Calu3 (cell line): ENCODE measurements at regions of chr4 and their contacts with region 1.

Region 1: GRCh38 chr4:168585168-168586091 is 88.6 kb downstream of the PALLD start:
- DNase-seq: peak; percentile 64
- H3K4me3 Mint-ChIP-seq: no peak overlapping the region
- H3K27ac Mint-ChIP-seq: no peak overlapping the region
- H3K4me1 Mint-ChIP-seq: peaks cover 17% of the 10 kb centered on the region
- H3K27me3 Mint-ChIP-seq: no peaks in the 10 kb centered on the region
- CTCF ChIP-seq: peak; percentile 62

Region 2: DNA sequence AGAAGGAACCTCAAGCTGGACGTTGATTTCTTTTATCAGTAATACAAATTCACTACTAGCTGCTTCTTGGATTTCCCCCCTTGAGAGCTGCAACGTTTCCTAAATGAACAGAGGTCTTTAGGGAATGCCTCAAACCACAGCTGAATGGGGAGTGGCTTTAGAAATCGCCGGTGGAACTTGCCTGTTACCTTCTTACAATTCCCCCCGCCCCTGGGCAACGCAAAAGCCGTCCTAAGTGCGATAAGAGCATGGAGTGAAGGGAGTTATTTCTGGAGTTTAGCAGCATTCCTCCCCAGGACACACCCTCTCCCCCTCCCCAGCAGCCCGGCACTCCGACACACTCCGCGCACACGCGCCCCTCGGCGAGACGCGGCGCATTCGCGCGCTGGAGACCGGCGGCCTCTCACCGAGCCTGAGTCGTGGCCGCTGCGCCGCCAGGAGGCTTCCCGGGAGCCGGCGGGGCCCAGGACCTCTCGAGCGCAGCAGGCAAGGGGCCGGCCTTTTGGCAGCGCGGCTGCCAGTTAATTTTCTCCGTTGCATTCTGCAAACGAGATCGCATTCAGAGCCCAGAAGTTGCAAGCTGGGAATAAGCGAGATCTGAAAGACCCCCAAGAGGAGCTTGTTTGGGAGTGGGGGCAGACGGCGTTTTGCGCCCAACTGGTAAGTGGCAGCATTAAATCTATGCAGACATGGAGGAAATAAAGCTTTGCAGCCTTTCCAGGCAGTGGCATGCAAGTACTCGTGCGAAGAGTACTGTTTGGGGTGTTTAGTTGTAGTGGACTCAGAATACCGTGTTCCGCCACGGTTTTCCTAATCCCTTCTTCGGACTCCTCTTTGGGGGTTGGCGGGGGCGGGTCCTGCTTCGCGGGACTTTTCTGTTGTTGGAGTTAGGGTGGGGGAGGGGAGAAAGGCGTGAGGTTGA is 46.1 kb after region 1 on chr4:
- CTCF ChIA-PET with region 1: no interaction called
- intact Hi-C with region 1: loop called (anchors 5 kb)
- DNase-seq: peak; percentile 64
- H3K4me3 Mint-ChIP-seq: peak overlapping the region; percentile 83
- H3K27ac Mint-ChIP-seq: no peak overlapping the region
- H3K4me1 Mint-ChIP-seq: peaks cover 13% of the 10 kb centered on the region
- H3K27me3 Mint-ChIP-seq: no peaks in the 10 kb centered on the region
- CTCF ChIP-seq: no peak

Region 3: DNA sequence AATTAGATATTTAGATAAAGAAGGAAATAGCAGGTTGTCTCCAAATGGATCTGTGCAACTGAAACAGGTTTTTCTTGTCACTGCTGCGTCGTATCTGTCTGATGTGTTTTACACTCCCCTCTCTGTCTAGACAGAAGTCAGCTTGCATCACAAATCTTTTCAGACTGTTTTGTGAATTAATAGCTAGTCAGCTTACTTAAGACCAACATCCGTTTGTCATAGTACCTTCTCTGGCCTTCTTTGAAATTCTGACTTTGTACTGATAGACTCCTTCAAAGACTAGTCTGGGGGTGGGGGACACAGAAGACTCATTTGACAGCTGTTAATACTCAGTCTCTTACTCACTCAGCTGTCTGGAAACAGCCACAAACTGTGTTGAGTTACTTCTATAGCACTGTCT is 109.2 kb after region 1 on chr4:
- CTCF ChIA-PET with region 1: no interaction called
- intact Hi-C with region 1: loop called (anchors 5 kb)
- DNase-seq: no peak
- H3K4me3 Mint-ChIP-seq: no peak overlapping the region
- H3K27ac Mint-ChIP-seq: no peak overlapping the region
- H3K4me1 Mint-ChIP-seq: peaks cover 11% of the 10 kb centered on the region
- H3K27me3 Mint-ChIP-seq: no peaks in the 10 kb centered on the region
- CTCF ChIP-seq: no peak

Region 4: GRCh38 chr4:168710353-168710946 is 125.0 kb after region 1 on chr4:
- CTCF ChIA-PET with region 1: no interaction called
- intact Hi-C with region 1: loop called (anchors 5 kb)
- DNase-seq: peak; percentile 17
- H3K4me3 Mint-ChIP-seq: no peak overlapping the region
- H3K27ac Mint-ChIP-seq: no peak overlapping the region
- H3K4me1 Mint-ChIP-seq: no peaks in the 10 kb centered on the region
- H3K27me3 Mint-ChIP-seq: no peaks in the 10 kb centered on the region
- CTCF ChIP-seq: no peak

Region 5: DNA sequence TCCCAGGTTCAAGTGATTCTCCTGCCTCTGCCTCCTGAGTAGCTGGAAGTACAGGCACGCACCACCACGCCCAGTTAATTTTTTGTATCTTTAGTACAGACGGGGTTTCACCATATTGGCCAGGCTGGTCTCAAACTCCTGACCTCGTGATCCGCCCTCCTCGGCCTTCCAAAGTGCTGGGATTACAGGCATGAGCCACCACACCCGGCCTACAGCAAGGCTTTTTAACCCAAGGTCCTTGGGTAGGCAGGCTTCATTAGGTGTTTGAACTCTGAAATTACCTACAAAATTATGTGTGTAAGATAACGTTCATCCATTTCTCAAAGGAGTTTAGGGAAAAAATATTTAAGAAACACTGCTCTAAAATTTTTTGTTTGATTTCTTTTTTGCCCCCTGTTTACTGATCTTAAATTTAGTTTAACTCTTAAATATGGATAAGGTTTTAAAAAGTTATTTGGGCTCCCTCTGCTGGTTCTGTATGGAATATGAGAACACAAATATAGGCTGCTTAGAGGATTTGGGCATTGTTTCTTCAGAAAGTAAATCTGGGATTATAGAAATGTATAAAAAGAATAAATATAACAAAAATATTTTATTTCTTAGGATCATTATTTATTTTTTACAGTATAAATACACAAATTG is 331.8 kb after region 1 on chr4:
- CTCF ChIA-PET with region 1: interaction called, 7 read pairs
- intact Hi-C with region 1: loop called (anchors 5 kb)
- DNase-seq: no peak
- H3K4me3 Mint-ChIP-seq: no peak overlapping the region
- H3K27ac Mint-ChIP-seq: no peak overlapping the region
- H3K4me1 Mint-ChIP-seq: no peaks in the 10 kb centered on the region
- H3K27me3 Mint-ChIP-seq: no peaks in the 10 kb centered on the region
- CTCF ChIP-seq: no peak